ENCODE measurements at regions of chr3 and their contacts with region 1.

Region 1: DNA sequence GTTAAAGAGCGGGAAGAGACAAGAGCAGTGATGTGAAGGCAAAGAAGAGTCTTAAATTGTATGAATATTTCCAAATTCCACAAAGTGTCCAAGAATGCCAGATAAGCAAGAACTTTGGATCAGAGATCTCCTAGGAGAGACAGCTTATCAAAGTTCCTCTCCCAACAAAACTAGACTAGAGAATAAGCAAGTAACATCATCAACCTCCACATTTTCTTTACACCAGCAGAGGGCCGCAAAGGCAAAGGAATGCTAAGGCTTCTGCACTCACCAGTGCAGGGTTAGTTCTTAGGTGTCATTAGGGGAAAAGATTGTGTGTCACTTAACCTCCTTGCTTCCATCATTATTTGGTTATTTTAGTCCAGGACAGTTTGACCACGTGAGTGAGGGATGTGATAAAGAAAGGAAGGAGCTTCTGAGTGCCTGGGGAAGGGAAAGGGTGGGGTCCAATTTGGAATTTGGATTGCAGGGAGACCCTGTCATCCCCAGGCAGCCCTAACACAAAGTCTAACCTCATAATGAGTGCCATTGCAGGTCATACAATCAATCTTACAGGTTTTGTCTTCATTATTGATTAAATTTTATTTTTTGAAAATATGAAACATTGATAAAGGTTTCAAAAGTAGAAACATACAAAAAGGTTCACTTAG is 7.5 kb upstream of the CMTM6 start:
- ATAC-seq: peak; percentile 53 to 93 (median 84)
- H3K4me3 ChIP-seq: no peak overlapping the region
- H3K27ac ChIP-seq: no peak overlapping the region
- H3K4me1 ChIP-seq: peaks cover 0 to 2% of the 10 kb centered on the region in 2 donors

Region 2: DNA sequence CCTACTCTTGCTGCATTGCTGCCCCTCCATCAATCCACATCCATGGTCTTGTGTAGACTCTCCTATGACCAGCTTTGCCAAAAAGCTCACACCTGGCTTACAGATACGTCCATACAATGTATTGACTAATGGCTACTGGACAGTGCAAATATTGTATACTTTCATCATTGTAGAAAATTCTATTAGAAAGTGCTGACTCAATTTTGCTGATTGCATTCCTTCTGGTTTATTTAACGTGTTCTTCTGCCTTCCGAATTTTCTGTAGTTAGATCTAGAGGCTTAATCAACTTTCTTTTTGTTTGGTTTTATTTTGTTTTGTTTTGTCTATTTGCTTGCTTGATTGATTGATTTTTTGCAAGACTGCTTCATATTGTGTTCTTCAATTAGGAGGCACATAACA is 145.0 kb after region 1 on chr3:
- in situ Hi-C with region 1: loop called in 6 of 9 experiments (anchors 10 to 25 kb)
- ATAC-seq: no peak
- H3K4me3 ChIP-seq: no peak overlapping the region
- H3K27ac ChIP-seq: no peak overlapping the region
- H3K4me1 ChIP-seq: no peaks in the 10 kb centered on the region

Measured in motor neuron (in vitro differentiated cells).